CD8-positive, alpha-beta T cell (primary cell): ENCODE measurements at regions of chr7 and their contacts with region 1.

Region 1: GRCh38 chr7:6008668-6009611 is at the starts of genes AIMP2 and PMS2:
- DNase-seq: peak; percentile 88 to 97 (median 95)
- ATAC-seq: peak; percentile 84
- H3K4me3 ChIP-seq: peak within 1 kb of the TSS; percentile 83 to 99
- H3K4me3 Mint-ChIP-seq: peak within 1 kb of the TSS; percentile 96
- H3K27ac ChIP-seq: peak within 1 kb of the TSS; percentile 89 to 95
- H3K27ac Mint-ChIP-seq: peak within 1 kb of the TSS; percentile 97
- H3K4me1 ChIP-seq: peaks cover 18% of the 10 kb centered on the region
- H3K4me1 Mint-ChIP-seq: peaks cover 38% of the 10 kb centered on the region
- H3K27me3 ChIP-seq: no peaks in the 10 kb centered on the region
- H3K27me3 Mint-ChIP-seq: no peaks in the 10 kb centered on the region
- CTCF ChIP-seq: peak; percentile 19
- total RNA-seq, gene AIMP2: 5.2 to 6.9 TPM
- total RNA-seq, gene PMS2: 8.5 to 10.4 TPM

Region 2: DNA sequence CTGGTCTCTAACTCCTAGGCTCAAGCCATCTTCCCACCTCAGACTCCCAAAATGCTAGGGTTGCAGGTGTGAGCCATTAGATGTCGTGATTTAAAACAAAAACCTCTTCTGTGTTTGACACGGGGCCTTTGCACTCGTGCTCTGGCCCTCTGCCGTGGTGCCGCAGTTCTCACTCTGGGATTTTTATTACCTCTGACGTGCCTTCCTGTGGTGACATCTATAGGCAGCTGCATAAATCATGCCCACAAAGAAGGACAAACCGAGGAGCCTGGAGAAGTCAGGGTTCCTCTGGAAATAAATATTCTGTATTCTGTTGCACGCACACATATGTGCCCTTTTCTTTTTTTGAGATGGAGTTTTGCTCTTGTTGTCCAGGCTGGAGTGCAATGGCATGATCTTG is 154.2 kb before region 1 on chr7:
- CTCF ChIA-PET with region 1: no interaction called
- POLR2A ChIA-PET with region 1: no interaction called
- intact Hi-C with region 1: loop called in 1 of 2 experiments (anchors 5 kb)
- DNase-seq: no peak
- ATAC-seq: no peak
- H3K4me3 ChIP-seq: no peak overlapping the region
- H3K4me3 Mint-ChIP-seq: no peak overlapping the region
- H3K27ac ChIP-seq: no peak overlapping the region
- H3K27ac Mint-ChIP-seq: no peak overlapping the region
- H3K4me1 ChIP-seq: peaks cover 16% of the 10 kb centered on the region
- H3K4me1 Mint-ChIP-seq: peaks cover 18% of the 10 kb centered on the region
- H3K27me3 ChIP-seq: no peaks in the 10 kb centered on the region
- H3K27me3 Mint-ChIP-seq: no peaks in the 10 kb centered on the region
- CTCF ChIP-seq: no peak

Region 3: GRCh38 chr7:5997222-5997808 is 11.6 kb before region 1 on chr7:
- CTCF ChIA-PET with region 1: interaction called, 17 read pairs
- POLR2A ChIA-PET with region 1: interaction called, 4 read pairs
- intact Hi-C with region 1: no loop called
- DNase-seq: peak; percentile 17 to 80 (median 54)
- ATAC-seq: peak; percentile 76
- H3K4me3 ChIP-seq: no peak overlapping the region
- H3K4me3 Mint-ChIP-seq: no peak overlapping the region
- H3K27ac ChIP-seq: no peak overlapping the region
- H3K27ac Mint-ChIP-seq: no peak overlapping the region
- H3K4me1 ChIP-seq: no peaks in the 10 kb centered on the region
- H3K4me1 Mint-ChIP-seq: no peaks in the 10 kb centered on the region
- H3K27me3 ChIP-seq: no peaks in the 10 kb centered on the region
- H3K27me3 Mint-ChIP-seq: no peaks in the 10 kb centered on the region
- CTCF ChIP-seq: peak; percentile 73

Region 4: DNA sequence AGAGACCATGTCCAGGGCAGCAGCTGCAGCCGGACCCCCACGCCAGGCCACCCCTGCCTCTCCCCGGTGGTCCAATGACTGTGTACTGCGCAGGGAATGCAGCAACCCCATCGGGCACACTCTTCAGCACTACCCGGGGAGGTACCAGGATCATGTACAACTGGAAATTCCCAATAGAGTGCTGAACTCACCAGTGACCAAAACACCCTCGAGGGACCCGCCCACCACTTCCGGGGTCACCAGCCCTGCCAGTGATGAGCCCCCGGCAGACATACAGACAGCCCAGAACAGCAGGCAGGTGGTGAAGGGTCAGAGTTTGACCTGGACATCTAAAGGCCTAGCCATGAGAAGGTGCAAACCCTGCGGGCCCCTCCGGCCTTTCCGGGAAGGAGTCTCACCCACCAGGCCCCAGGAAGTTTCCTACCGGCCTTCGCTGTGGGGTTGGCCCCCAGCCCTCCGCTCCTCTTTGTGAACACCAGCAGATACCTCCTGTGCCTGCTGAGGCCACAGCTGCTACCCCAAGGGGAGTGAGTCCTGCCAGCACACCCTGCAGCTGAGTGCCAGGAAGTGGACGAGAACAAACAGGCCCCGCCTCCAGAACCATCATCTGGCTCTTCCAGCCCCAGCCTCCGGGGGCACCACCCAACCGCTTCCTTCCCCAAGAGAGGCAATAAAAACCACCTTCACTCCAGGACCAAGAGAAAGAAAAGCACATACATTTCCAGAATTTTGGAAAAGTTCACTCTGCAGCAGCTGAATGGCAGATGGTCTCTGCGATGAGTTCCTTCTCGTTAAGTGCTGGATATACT is 17.3 kb after region 1 on chr7:
- CTCF ChIA-PET with region 1: interaction called, 5 read pairs
- POLR2A ChIA-PET with region 1: interaction called, 4 read pairs
- intact Hi-C with region 1: loop called (anchors 1 to 2 kb)
- DNase-seq: peak; percentile 40 to 88 (median 77)
- ATAC-seq: peak; percentile 100
- H3K4me3 ChIP-seq: peak overlapping the region; percentile 43 to 59
- H3K4me3 Mint-ChIP-seq: peak overlapping the region; percentile 78
- H3K27ac ChIP-seq: peak overlapping the region; percentile 25 to 87
- H3K27ac Mint-ChIP-seq: peak overlapping the region; percentile 90
- H3K4me1 ChIP-seq: peaks cover 20% of the 10 kb centered on the region
- H3K4me1 Mint-ChIP-seq: peaks cover 12% of the 10 kb centered on the region
- H3K27me3 ChIP-seq: no peaks in the 10 kb centered on the region
- H3K27me3 Mint-ChIP-seq: no peaks in the 10 kb centered on the region
- CTCF ChIP-seq: no peak

Region 5: DNA sequence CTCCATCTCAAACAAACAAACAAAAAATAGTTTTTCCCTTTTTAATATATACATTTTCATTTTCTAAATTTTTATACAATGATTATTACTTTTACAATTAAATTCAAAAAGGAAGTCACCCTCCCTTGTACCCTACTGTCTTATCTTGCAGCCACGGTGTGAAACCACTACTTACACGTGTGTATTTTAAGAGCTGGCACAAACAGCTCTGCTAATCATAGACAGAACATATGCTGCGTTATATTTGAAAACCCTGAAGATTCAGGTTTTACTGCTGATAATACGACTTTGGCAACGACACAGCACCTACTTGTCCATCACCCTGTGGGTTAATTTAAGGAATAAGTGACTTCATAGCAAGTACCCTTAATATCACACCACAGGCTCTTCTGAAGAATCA is 23.2 kb after region 1 on chr7:
- CTCF ChIA-PET with region 1: interaction called, 4 read pairs
- POLR2A ChIA-PET with region 1: interaction called, 4 read pairs
- intact Hi-C with region 1: loop called in 1 of 2 experiments (anchors 1 kb)
- DNase-seq: peak in 2 of 9 experiments; percentile 33 to 50
- ATAC-seq: no peak
- H3K4me3 ChIP-seq: no peak overlapping the region
- H3K4me3 Mint-ChIP-seq: no peak overlapping the region
- H3K27ac ChIP-seq: peak overlapping the region in 1 of 2 experiments; percentile 41
- H3K27ac Mint-ChIP-seq: no peak overlapping the region
- H3K4me1 ChIP-seq: peaks cover 4% of the 10 kb centered on the region
- H3K4me1 Mint-ChIP-seq: peaks cover 19% of the 10 kb centered on the region
- H3K27me3 ChIP-seq: no peaks in the 10 kb centered on the region
- H3K27me3 Mint-ChIP-seq: no peaks in the 10 kb centered on the region
- CTCF ChIP-seq: no peak

Region 6: GRCh38 chr7:6049780-6050179 is 40.8 kb after region 1 on chr7:
- CTCF ChIA-PET with region 1: no interaction called
- POLR2A ChIA-PET with region 1: no interaction called
- intact Hi-C with region 1: no loop called
- DNase-seq: no peak
- ATAC-seq: no peak
- H3K4me3 ChIP-seq: no peak overlapping the region
- H3K4me3 Mint-ChIP-seq: no peak overlapping the region
- H3K27ac ChIP-seq: no peak overlapping the region
- H3K27ac Mint-ChIP-seq: no peak overlapping the region
- H3K4me1 ChIP-seq: no peaks in the 10 kb centered on the region
- H3K4me1 Mint-ChIP-seq: peaks cover 2% of the 10 kb centered on the region
- H3K27me3 ChIP-seq: no peaks in the 10 kb centered on the region
- H3K27me3 Mint-ChIP-seq: no peaks in the 10 kb centered on the region
- CTCF ChIP-seq: no peak

Region 7: GRCh38 chr7:6106140-6106904 is 97.4 kb after region 1 on chr7:
- CTCF ChIA-PET with region 1: interaction called, 8 read pairs
- POLR2A ChIA-PET with region 1: no interaction called
- intact Hi-C with region 1: loop called in 1 of 2 experiments (anchors 1 kb)
- DNase-seq: peak in 6 of 9 experiments; percentile 12 to 76 (median 32)
- ATAC-seq: no peak
- H3K4me3 ChIP-seq: peak overlapping the region; percentile 62 to 70
- H3K4me3 Mint-ChIP-seq: peak overlapping the region; percentile 86
- H3K27ac ChIP-seq: peak overlapping the region; percentile 67 to 88
- H3K27ac Mint-ChIP-seq: peak overlapping the region; percentile 91
- H3K4me1 ChIP-seq: peaks cover 15% of the 10 kb centered on the region
- H3K4me1 Mint-ChIP-seq: peaks cover 42% of the 10 kb centered on the region
- H3K27me3 ChIP-seq: no peaks in the 10 kb centered on the region
- H3K27me3 Mint-ChIP-seq: no peaks in the 10 kb centered on the region
- CTCF ChIP-seq: peak; percentile 29

Region 8: GRCh38 chr7:6435486-6436384 is 426.8 kb after region 1 on chr7:
- CTCF ChIA-PET with region 1: no interaction called
- POLR2A ChIA-PET with region 1: no interaction called
- intact Hi-C with region 1: loop called in 1 of 2 experiments (anchors 10 kb)
- DNase-seq: peak; percentile 79 to 93 (median 87)
- ATAC-seq: peak; percentile 97
- H3K4me3 ChIP-seq: peak overlapping the region; percentile 3 to 50
- H3K4me3 Mint-ChIP-seq: peak overlapping the region; percentile 80
- H3K27ac ChIP-seq: peak overlapping the region; percentile 17 to 31
- H3K27ac Mint-ChIP-seq: peak overlapping the region; percentile 90
- H3K4me1 ChIP-seq: peaks cover 37% of the 10 kb centered on the region
- H3K4me1 Mint-ChIP-seq: peaks cover 43% of the 10 kb centered on the region
- H3K27me3 ChIP-seq: no peaks in the 10 kb centered on the region
- H3K27me3 Mint-ChIP-seq: no peaks in the 10 kb centered on the region
- CTCF ChIP-seq: peak; percentile 95